Adrenal gland (tissue), 19 donors: ENCODE measurements at regions of chr12 and their contacts with region 1.

Region 1: DNA sequence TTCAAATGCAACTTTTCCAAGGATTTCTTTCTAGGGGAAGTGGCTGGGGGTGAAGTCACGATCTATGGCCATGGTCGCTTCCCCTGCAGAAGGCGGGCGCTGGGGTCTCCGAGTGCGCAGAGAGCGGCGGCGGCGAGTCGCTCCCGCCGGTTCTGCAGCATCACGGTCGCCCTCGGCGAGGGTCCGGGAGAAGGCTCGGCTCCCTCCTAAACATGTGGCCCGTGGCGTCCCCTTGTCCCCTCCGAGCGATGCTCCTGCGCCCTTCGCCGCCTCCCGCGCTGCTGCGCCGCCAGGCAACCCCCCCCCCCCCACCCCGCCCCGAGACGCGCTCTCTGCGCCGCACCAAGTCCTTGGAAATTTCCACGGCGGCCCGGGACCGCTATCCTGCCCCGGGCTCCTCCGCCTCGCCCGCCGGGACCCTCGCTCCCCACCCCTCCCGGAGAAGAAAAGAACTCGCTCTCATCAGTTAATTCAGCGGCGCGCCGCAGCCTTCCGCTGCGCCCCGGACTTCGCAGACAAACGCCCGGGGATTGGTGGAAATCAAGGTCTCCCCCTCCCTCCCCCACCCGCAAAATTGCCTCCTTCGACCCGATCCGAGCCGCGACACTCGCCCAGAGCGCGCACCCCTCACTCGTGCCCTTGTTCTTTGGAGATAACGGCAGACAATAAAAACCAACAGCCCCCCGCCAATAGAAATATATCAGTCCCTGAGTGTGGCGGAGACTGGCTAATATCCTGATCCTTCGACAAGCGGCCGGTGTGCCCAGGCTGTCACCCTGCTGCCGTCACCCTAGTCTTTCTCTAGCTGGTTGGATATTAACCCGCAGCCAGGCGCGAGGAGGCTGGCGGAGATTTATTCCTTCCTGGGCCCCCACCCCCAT is at the start of gene ST8SIA1:
- DNase-seq: peak; percentile 49 to 81 (median 65)
- H3K4me3 ChIP-seq: peak within 1 kb of the TSS in 3 of 4 donors; percentile 11 to 79 (median 55)
- H3K27ac ChIP-seq: peak within 1 kb of the TSS in 4 of 5 donors; percentile 49 to 90 (median 72)
- H3K4me1 ChIP-seq: peaks cover 0 to 17% of the 10 kb centered on the region in 2 donors
- H3K27me3 ChIP-seq: no peaks in the 10 kb centered on the region
- CTCF ChIP-seq: no peak
- POLR2A ChIP-seq: peak in 1 of 2 donors; percentile 42
- total RNA-seq, gene ST8SIA1: 3.1 to 37.8 (median 11.8) TPM

Region 2: GRCh38 chr12:22088886-22089285 is 245.8 kb before region 1 on chr12:
- intact Hi-C with region 1: loop called in 1 of 2 experiments (anchors 5 kb)
- DNase-seq: no peak
- H3K4me3 ChIP-seq: no peak overlapping the region
- H3K27ac ChIP-seq: no peak overlapping the region
- H3K4me1 ChIP-seq: no peaks in the 10 kb centered on the region
- H3K27me3 ChIP-seq: no peaks in the 10 kb centered on the region
- CTCF ChIP-seq: no peak
- POLR2A ChIP-seq: no peak

Region 3: DNA sequence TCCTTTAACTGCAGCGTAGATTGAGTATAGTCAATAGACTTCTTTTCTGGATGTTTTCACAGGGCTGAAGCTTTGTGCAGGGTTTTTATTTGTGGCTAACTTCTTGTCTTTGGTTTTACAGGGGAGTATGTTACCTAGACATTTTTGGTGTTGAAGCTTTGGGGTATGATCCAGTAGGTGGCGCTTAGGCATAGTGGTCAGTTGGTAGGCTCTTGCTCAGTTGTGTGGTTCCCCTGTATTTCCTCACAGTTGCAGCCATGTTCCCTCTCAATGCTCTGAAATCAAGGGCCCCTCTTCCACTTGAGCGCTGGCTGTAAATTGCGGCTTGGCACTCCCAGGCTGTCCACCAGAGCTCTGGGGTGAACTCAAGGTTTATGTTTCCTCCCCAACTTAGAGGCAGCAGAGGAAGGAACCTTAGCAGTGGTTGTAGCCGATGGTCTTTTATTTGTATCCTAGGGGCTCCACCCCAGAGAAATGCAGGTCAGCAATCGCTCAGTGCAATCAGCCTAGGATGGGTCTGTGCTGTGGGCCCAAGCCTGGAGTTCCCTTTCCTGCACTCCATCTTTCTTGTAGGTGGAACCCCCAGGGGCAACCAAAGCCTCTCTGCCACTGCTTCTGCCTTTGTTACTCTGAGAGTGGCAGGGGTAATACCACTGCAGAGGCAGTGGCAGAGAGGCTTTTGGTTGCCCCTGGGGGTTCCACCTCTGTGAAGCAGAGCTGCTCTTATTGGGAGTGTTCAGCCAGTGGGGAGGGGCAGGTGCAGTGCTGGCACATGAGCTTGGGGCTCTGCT is 233.5 kb before region 1 on chr12:
- intact Hi-C with region 1: loop called (anchors 5 to 10 kb)
- DNase-seq: peak; percentile 49 to 84 (median 54)
- H3K4me3 ChIP-seq: no peak overlapping the region
- H3K27ac ChIP-seq: no peak overlapping the region
- H3K4me1 ChIP-seq: peaks cover 0 to 3% of the 10 kb centered on the region in 2 donors
- H3K27me3 ChIP-seq: no peaks in the 10 kb centered on the region
- CTCF ChIP-seq: peak; percentile 40 to 73 (median 64)
- POLR2A ChIP-seq: no peak

Region 4: DNA sequence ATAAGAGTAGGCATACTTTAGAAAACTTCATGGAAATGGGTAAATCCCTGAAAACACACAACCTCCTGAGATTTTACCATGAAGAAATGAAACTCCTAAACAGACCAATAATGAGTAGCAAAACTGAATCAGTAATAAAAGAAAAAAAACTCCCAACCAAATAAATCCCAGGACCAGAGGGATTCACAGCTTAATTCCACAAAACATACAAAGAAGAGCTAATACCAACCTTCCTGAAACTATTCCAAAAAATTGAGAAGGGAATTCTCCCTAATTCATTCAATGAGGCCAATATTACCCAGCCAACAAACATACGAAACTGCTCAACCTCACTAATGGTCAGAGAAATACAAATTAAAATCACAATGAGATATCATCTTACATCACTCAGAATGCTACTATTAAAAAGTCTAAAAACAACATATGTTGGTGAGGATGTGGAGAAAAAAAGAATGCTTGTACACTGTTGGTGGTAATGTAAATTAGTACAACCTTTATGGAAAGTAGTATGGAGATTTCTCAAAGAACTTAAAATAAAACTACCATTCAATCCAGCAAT is 97.1 kb after region 1 on chr12:
- intact Hi-C with region 1: no loop called
- DNase-seq: no peak
- H3K4me3 ChIP-seq: no peak overlapping the region
- H3K27ac ChIP-seq: no peak overlapping the region
- H3K4me1 ChIP-seq: no peaks in the 10 kb centered on the region
- H3K27me3 ChIP-seq: no peaks in the 10 kb centered on the region
- CTCF ChIP-seq: no peak
- POLR2A ChIP-seq: no peak